Natural killer cell (primary cell): ENCODE measurements at regions of chr10 and their contacts with region 1.

Region 1: GRCh38 chr10:4241724-4242345 is 456.8 kb upstream of the KLF6 start:
- DNase-seq: no peak
- ATAC-seq: no peak
- H3K4me3 ChIP-seq: no peak overlapping the region
- H3K4me3 Mint-ChIP-seq: no peak overlapping the region
- H3K27ac ChIP-seq: no peak overlapping the region
- H3K27ac Mint-ChIP-seq: no peak overlapping the region
- H3K4me1 ChIP-seq: no peaks in the 10 kb centered on the region
- H3K4me1 Mint-ChIP-seq: peaks cover 5 to 18% of the 10 kb centered on the region in 2 donors
- H3K27me3 ChIP-seq: no peaks in the 10 kb centered on the region
- H3K27me3 Mint-ChIP-seq: peaks cover 2 to 6% of the 10 kb centered on the region in 2 donors
- CTCF ChIP-seq: no peak

Region 2: GRCh38 chr10:4034907-4035598 is 206.8 kb before region 1 on chr10:
- intact Hi-C with region 1: loop called (anchors 5 kb)
- DNase-seq: peak in 1 of 2 donors; percentile 45
- ATAC-seq: peak; percentile 63 to 78 (median 73)
- H3K4me3 ChIP-seq: peak overlapping the region; percentile 28
- H3K4me3 Mint-ChIP-seq: peak overlapping the region; percentile 92
- H3K27ac ChIP-seq: peak overlapping the region; percentile 41
- H3K27ac Mint-ChIP-seq: peak overlapping the region; percentile 77 to 90
- H3K4me1 ChIP-seq: peaks cover 15% of the 10 kb centered on the region
- H3K4me1 Mint-ChIP-seq: peaks cover 13 to 26% of the 10 kb centered on the region in 2 donors
- H3K27me3 ChIP-seq: no peaks in the 10 kb centered on the region
- H3K27me3 Mint-ChIP-seq: no peaks in the 10 kb centered on the region
- CTCF ChIP-seq: no peak